ENCODE measurements at regions of chr1 and their contacts with region 1.

Region 1: GRCh38 chr1:222455188-222455879 is 92.6 kb downstream of the HHIPL2 start:
- DNase-seq: peak; percentile 87
- H3K4me3 ChIP-seq: peak overlapping the region; percentile 14
- H3K27ac ChIP-seq: peak overlapping the region; percentile 40
- H3K27me3 ChIP-seq: no peaks in the 10 kb centered on the region
- CTCF ChIP-seq: peak; percentile 95

Region 2: DNA sequence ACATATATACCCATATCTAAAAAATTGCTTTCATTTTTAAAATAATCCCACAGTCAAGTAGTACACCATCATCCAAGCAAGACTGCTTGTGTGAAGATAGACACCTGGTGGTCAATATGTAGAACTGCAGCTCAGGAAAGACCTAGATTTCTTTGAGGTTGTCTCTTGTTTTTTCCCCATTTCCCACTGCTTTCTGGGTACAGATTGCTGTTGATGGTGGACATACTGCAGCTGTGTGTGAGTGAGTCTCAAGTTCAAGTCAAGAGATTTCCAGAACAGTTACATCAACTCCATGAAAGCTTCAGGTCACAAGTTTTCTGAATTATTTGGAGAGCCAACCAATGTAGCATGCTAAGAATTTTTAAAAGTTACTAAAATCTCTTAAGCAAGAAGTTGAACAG is 1019.8 kb before region 1 on chr1:
- CTCF ChIA-PET with region 1: interaction called, 27 read pairs
- POLR2A ChIA-PET with region 1: no interaction called
- DNase-seq: peak; percentile 65
- H3K4me3 ChIP-seq: no peak overlapping the region
- H3K27ac ChIP-seq: no peak overlapping the region
- H3K27me3 ChIP-seq: no peaks in the 10 kb centered on the region
- CTCF ChIP-seq: peak; percentile 96

Region 3: DNA sequence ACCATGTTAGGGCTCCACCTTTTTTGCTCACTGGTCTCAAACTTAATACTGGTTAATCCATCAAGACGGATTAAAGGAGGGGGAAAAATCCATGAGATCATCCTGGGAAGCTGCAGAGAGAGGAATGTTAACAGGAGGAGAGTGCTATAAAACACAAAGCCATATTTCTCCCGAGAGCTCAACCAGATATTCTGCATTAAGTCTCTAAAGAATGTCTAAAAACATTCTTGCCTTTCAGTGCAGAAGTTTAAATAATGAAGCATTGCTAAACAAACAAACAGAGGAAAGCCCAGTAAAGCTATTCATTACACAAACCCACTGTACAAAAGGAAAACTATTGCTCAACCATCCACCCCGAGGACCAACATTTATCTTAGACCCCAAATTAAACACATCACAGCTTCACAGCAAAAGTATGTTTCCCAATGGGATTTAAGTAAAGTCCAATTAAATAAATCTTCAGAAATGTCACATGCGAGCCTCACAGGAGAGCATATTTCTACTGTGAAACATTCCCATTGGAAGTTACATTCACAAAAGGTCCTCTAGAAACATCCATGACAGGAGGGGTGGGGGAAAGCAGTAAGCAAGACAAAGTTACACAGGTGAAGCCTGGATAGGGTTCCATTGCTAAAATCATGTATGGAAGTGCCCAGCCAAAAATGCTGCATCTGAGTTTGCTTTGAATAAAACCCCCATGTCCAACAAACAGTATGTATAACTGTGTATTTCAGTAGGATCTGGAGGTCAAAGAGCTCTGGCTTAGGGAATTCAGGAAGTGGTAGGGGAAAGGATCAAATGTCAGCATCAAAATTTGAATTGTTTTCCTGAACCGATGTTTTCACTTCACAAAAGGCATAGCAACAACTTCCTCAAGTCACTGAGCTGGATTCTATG is 736.7 kb before region 1 on chr1:
- CTCF ChIA-PET with region 1: interaction called, 22 read pairs
- POLR2A ChIA-PET with region 1: interaction called, 3 read pairs
- DNase-seq: peak; percentile 86
- H3K4me3 ChIP-seq: no peak overlapping the region
- H3K27ac ChIP-seq: peak overlapping the region; percentile 82
- H3K27me3 ChIP-seq: no peaks in the 10 kb centered on the region
- CTCF ChIP-seq: no peak

Region 4: DNA sequence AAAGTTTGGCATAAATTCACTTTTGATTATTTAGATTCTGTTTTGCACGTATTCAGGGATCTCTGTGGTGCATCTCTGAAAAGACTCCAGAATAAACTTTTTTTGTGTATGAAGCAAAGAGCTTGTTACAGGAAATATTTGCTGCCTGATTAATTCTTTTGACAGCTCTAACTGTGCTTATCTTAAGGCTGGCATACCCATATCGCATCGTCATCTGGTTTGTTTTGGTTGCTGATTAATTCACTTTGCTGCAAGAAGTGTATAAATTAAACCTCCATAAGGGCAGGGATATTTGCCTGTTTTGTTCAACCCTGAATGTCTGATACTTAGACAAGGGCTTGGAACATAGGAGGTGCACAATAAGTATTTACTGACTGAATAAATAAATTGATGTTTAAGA is 695.9 kb before region 1 on chr1:
- CTCF ChIA-PET with region 1: interaction called, 11 read pairs
- POLR2A ChIA-PET with region 1: no interaction called
- DNase-seq: no peak
- H3K4me3 ChIP-seq: no peak overlapping the region
- H3K27ac ChIP-seq: no peak overlapping the region
- H3K27me3 ChIP-seq: no peaks in the 10 kb centered on the region
- CTCF ChIP-seq: no peak

Region 5: GRCh38 chr1:222028116-222028515 is 427.2 kb before region 1 on chr1:
- CTCF ChIA-PET with region 1: interaction called, 11 read pairs
- POLR2A ChIA-PET with region 1: no interaction called
- DNase-seq: no peak
- H3K4me3 ChIP-seq: no peak overlapping the region
- H3K27ac ChIP-seq: no peak overlapping the region
- H3K27me3 ChIP-seq: no peaks in the 10 kb centered on the region
- CTCF ChIP-seq: no peak

Region 6: GRCh38 chr1:222394224-222394623 is 61.1 kb before region 1 on chr1:
- CTCF ChIA-PET with region 1: no interaction called
- POLR2A ChIA-PET with region 1: no interaction called
- DNase-seq: no peak
- H3K4me3 ChIP-seq: no peak overlapping the region
- H3K27ac ChIP-seq: no peak overlapping the region
- H3K27me3 ChIP-seq: no peaks in the 10 kb centered on the region
- CTCF ChIP-seq: no peak

Region 7: DNA sequence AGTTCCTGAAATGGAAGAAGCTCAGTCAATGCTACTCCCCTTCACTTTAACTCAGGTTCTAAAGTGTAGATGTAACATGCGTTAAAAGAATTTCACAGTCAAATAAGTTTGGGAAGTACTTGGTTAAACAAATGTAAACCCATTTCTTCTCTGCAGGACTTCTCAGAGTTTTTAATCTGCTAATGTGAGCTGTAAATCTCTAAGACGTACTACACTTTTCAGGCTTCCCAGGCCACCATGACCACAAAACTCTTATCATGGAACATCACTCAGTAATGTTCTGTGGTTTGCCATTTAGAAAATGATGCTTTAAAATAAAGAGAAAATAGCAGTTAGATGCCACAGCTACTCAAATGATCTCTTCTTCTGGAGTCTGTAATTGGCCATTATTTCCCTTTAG is 11.8 kb before region 1 on chr1:
- CTCF ChIA-PET with region 1: interaction called, 12 read pairs
- POLR2A ChIA-PET with region 1: no interaction called
- DNase-seq: no peak
- H3K4me3 ChIP-seq: no peak overlapping the region
- H3K27ac ChIP-seq: no peak overlapping the region
- H3K27me3 ChIP-seq: no peaks in the 10 kb centered on the region
- CTCF ChIP-seq: no peak